Naive thymus-derived CD4-positive, alpha-beta T cell (primary cell): ENCODE measurements at regions of chr20 and their contacts with region 1.

Region 1: GRCh38 chr20:62793912-62794724 is 2.2 kb upstream of the MRGBP start:
- DNase-seq: peak; percentile 85 to 100 (median 93)
- ATAC-seq: peak; percentile 87
- H3K4me3 ChIP-seq: peak overlapping the region; percentile 78
- H3K4me3 Mint-ChIP-seq: peak overlapping the region; percentile 78 to 95 (median 87)
- H3K27ac ChIP-seq: peak overlapping the region; percentile 83
- H3K27ac Mint-ChIP-seq: peak overlapping the region; percentile 86 to 97 (median 92)
- H3K4me1 ChIP-seq: peaks cover 15 to 24% of the 10 kb centered on the region in 2 donors
- H3K4me1 Mint-ChIP-seq: peaks cover 26 to 44% (median 41%) of the 10 kb centered on the region in 7 donors
- H3K27me3 ChIP-seq: no peaks in the 10 kb centered on the region
- H3K27me3 Mint-ChIP-seq: peaks cover 0 to 3% (median 0%) of the 10 kb centered on the region in 5 donors

Region 2: DNA sequence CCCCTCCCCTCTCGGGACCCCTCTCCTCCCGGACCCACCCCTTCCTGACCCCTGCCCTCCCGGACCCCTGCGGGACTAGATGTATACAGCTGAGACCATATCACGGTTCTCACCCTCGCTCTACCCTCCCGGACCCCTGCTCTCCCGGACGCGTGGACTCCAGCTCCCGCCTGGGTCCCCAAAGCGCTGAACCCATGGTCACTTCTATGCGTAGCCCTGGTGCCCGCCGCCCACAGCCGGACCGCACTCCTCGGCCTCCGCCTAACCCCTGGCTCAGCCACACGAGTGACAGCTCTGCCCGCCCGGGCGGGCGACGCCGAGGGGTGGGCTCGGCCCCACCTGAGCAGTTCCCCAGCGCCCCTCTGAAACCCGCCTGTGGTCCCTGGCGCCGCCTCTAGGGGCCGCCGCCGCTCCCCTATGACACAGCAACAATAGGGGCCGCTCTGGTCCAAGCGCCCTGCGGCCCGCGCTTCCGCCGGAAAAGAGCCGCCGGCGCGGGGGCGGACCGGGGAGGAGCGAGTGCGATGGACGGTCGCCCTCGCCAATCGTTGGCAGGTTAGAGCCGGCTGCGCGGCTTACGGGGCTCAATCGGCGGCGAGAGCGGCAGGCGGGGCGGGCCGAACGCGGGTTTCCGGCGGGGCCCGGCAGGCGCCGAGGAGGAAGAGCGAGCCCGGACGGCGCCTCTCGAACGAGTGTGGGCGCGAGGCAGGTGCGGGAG is 491.6 kb before region 1 on chr20 and contains the start of gene ADRM1:
- CTCF ChIA-PET with region 1: no interaction called
- POLR2A ChIA-PET with region 1: no interaction called
- intact Hi-C with region 1: loop called (anchors 1 to 5 kb)
- DNase-seq: peak; percentile 91 to 99 (median 96)
- ATAC-seq: peak; percentile 94
- H3K4me3 ChIP-seq: peak within 1 kb of the TSS; percentile 94
- H3K4me3 Mint-ChIP-seq: peak within 1 kb of the TSS; percentile 89 to 98 (median 96)
- H3K27ac ChIP-seq: peak within 1 kb of the TSS; percentile 85
- H3K27ac Mint-ChIP-seq: peak within 1 kb of the TSS; percentile 90 to 100 (median 96)
- H3K4me1 ChIP-seq: peaks cover 17 to 19% of the 10 kb centered on the region in 2 donors
- H3K4me1 Mint-ChIP-seq: peaks cover 17 to 32% (median 22%) of the 10 kb centered on the region in 7 donors
- H3K27me3 ChIP-seq: no peaks in the 10 kb centered on the region
- H3K27me3 Mint-ChIP-seq: no peaks in the 10 kb centered on the region
- total RNA-seq, gene ADRM1: 51.3 to 117 (median 55.0) TPM

Region 3: DNA sequence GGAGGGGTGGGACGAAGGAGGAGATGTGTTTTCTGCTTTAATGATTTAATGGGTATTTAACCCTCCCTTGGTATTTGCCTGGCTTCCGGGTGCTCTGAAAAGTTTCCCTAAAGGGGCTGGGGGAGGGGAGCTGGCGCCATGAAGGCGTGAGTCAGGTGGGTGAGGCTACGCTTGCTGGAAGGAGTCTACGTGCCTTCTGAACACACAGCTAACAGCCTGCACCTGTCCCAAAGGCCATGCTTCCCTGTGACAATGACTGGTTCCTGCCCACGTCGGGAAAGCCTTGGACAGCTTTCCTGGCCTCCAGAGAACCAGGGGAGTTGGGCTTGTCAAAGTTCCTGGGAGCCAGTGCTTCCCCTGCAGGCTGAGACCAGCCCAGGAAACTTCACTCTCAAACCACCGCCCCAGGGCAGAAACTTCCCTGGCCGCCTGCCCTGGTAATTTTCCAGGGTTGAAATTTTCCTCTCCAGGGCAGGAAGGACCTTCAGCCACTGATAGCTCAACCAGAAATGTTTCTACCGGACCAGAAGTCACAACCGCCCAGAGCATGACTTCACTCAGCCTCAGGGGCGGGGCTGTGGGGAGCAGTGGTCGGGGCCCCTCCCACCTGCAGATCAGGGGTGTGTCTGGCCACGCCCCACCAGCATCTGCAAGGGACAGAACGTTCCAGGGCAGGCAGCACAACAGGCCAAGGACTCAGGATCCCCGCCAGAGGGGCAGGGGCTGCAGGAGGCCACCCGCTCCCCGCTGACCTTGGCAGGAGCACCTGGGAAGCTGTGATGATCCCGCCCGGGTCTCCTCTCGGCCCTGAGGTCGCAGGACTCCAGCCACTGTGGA is 170.4 kb before region 1 on chr20:
- CTCF ChIA-PET with region 1: interaction called, 3 read pairs
- POLR2A ChIA-PET with region 1: interaction called, 5 read pairs
- intact Hi-C with region 1: loop called in 1 of 2 experiments (anchors 5 kb)
- DNase-seq: peak; percentile 31 to 85 (median 58)
- ATAC-seq: peak; percentile 96
- H3K4me3 ChIP-seq: peak overlapping the region; percentile 39
- H3K4me3 Mint-ChIP-seq: peak overlapping the region; percentile 41 to 85 (median 75)
- H3K27ac ChIP-seq: no peak overlapping the region
- H3K27ac Mint-ChIP-seq: peak overlapping the region; percentile 28 to 98 (median 72)
- H3K4me1 ChIP-seq: peaks cover 12 to 21% of the 10 kb centered on the region in 2 donors
- H3K4me1 Mint-ChIP-seq: peaks cover 11 to 38% (median 13%) of the 10 kb centered on the region in 7 donors
- H3K27me3 ChIP-seq: no peaks in the 10 kb centered on the region
- H3K27me3 Mint-ChIP-seq: no peaks in the 10 kb centered on the region

Region 4: GRCh38 chr20:62716198-62716940 is 77.7 kb before region 1 on chr20:
- CTCF ChIA-PET with region 1: no interaction called
- POLR2A ChIA-PET with region 1: interaction called, 7 read pairs
- intact Hi-C with region 1: loop called in 1 of 2 experiments (anchors 1 kb)
- DNase-seq: peak in 7 of 9 donors; percentile 33 to 62 (median 49)
- ATAC-seq: peak; percentile 82
- H3K4me3 ChIP-seq: no peak overlapping the region
- H3K4me3 Mint-ChIP-seq: peak overlapping the region; percentile 25 to 81 (median 71)
- H3K27ac ChIP-seq: peak overlapping the region; percentile 4
- H3K27ac Mint-ChIP-seq: peak overlapping the region; percentile 60 to 94 (median 84)
- H3K4me1 ChIP-seq: peaks cover 13 to 16% of the 10 kb centered on the region in 2 donors
- H3K4me1 Mint-ChIP-seq: peaks cover 12 to 31% (median 22%) of the 10 kb centered on the region in 7 donors
- H3K27me3 ChIP-seq: no peaks in the 10 kb centered on the region
- H3K27me3 Mint-ChIP-seq: peaks cover 0 to 62% (median 0%) of the 10 kb centered on the region in 5 donors

Region 5: GRCh38 chr20:62815066-62815991 is 21.2 kb after region 1 on chr20:
- CTCF ChIA-PET with region 1: interaction called, 3 read pairs
- POLR2A ChIA-PET with region 1: interaction called, 10 read pairs
- intact Hi-C with region 1: no loop called
- DNase-seq: no peak
- ATAC-seq: peak; percentile 27
- H3K4me3 ChIP-seq: no peak overlapping the region
- H3K4me3 Mint-ChIP-seq: peak overlapping the region in 9 of 10 donors; percentile 24 to 66 (median 53)
- H3K27ac ChIP-seq: no peak overlapping the region
- H3K27ac Mint-ChIP-seq: peak overlapping the region in 3 of 9 donors; percentile 9 to 42 (median 31)
- H3K4me1 ChIP-seq: peaks cover 0 to 12% of the 10 kb centered on the region in 2 donors
- H3K4me1 Mint-ChIP-seq: peaks cover 0 to 20% (median 10%) of the 10 kb centered on the region in 7 donors
- H3K27me3 ChIP-seq: peaks cover 5 to 28% of the 10 kb centered on the region in 2 donors
- H3K27me3 Mint-ChIP-seq: peaks cover 6 to 37% (median 8%) of the 10 kb centered on the region in 5 donors

Region 6: DNA sequence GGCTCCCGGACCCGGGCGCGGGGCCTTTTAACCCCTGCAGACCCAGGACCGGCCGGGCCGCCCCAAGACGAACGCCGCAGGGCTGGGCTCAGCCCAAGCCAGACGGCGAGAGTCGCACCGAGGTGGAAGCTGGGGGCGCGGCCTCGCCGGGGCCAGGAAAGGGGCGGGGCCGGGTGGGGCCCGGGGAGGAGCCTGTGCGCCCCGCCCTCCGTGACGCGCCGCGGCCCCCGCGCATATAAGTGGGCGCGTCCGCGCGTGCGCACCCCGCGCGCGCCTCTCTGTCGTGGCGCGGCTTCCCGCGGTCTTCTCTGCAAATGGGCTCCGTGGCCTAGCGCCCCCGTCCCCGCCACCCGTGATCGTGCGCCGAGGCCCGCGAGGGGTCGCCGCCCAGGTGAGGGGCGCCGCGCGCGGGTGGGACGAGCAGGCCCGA is 726.4 kb after region 1 on chr20 and contains the start of gene PPDPF:
- CTCF ChIA-PET with region 1: no interaction called
- POLR2A ChIA-PET with region 1: no interaction called
- intact Hi-C with region 1: loop called in 1 of 2 experiments (anchors 5 kb)
- DNase-seq: peak; percentile 76 to 92 (median 84)
- ATAC-seq: peak; percentile 96
- H3K4me3 ChIP-seq: peak within 1 kb of the TSS; percentile 86
- H3K4me3 Mint-ChIP-seq: peak within 1 kb of the TSS; percentile 65 to 89 (median 81)
- H3K27ac ChIP-seq: peak within 1 kb of the TSS; percentile 88
- H3K27ac Mint-ChIP-seq: peak within 1 kb of the TSS in 7 of 9 donors; percentile 51 to 88 (median 79)
- H3K4me1 ChIP-seq: peaks cover 11 to 14% of the 10 kb centered on the region in 2 donors
- H3K4me1 Mint-ChIP-seq: peaks cover 4 to 22% (median 9%) of the 10 kb centered on the region in 7 donors
- H3K27me3 ChIP-seq: no peaks in the 10 kb centered on the region
- H3K27me3 Mint-ChIP-seq: peaks cover 0 to 7% (median 0%) of the 10 kb centered on the region in 5 donors
- total RNA-seq, gene PPDPF: 138 to 225 (median 184) TPM